Left colon (tissue), 2 donors: ENCODE measurements at regions of chr2 and their contacts with region 1.

Region 1: GRCh38 chr2:48589170-48589767 is 28.4 kb upstream of the GTF2A1L start:
- DNase-seq: peak in 1 of 2 donors; percentile 11
- ATAC-seq: no peak

Region 2: DNA sequence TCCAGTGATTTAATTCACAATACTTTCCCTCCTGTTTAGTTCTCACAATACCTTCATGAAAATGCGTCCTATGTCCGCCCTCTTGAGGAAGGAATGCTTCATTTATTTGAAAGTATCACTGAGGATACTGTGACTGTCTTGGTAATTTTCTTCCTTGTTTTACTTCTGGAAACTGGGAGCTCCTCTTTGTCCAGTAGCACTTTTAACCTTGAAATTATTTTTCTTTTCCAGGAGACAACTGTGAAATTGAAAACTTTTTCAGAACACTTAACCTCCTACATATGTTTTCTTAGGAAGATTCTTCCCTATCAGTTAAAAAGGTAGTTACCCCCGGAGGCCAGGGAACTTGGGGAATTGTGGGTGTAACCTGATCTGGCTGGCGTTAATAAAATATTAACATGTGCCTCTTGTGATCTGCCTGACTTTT is 118.2 kb before region 1 on chr2:
- intact Hi-C with region 1: loop called in 1 of 2 experiments (anchors 10 kb)
- DNase-seq: no peak
- ATAC-seq: peak; percentile 88